ENCODE measurements at regions of chr3 and their contacts with region 1.

Region 1: GRCh38 chr3:27127195-27127594 is 242.0 kb downstream of the NEK10 start:
- DNase-seq: no peak
- ATAC-seq: no peak
- H3K4me3 ChIP-seq: no peak overlapping the region
- H3K27ac ChIP-seq: no peak overlapping the region
- H3K4me1 ChIP-seq: no peaks in the 10 kb centered on the region
- H3K27me3 ChIP-seq: no peaks in the 10 kb centered on the region
- CTCF ChIP-seq: no peak
- POLR2A ChIP-seq: no peak

Region 2: DNA sequence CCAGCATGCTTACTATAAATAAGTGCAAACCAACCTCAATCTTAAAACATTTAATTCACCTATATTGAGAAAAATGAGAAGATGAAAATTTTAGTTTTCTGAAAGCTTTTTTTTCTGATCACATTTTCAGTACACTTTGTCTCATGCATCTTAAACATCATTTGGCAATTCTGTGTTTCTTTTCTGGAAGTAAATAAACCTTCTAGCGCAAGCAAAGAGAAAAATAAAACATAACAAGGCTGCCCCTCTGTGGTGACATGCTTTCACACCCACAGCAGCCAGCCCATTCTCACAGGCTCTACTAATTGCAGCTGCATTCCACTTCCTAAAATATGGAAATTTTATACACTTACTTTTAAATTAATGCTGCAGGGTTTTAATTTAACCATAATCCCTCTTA is 151.9 kb after region 1 on chr3:
- intact Hi-C with region 1: loop called (anchors 10 kb)
- DNase-seq: peak; percentile 15 to 38 (median 22)
- ATAC-seq: no peak
- H3K4me3 ChIP-seq: no peak overlapping the region
- H3K27ac ChIP-seq: no peak overlapping the region
- H3K4me1 ChIP-seq: peaks cover 14% of the 10 kb centered on the region
- H3K27me3 ChIP-seq: no peaks in the 10 kb centered on the region
- CTCF ChIP-seq: peak; percentile 7 to 61 (median 40)
- POLR2A ChIP-seq: no peak